Activated CD4-positive, alpha-beta T cell treated with anti-CD3 and anti-CD28 coated beads for 36 hours (primary cell): ENCODE measurements at regions of chr13 and their contacts with region 1.

Region 1: DNA sequence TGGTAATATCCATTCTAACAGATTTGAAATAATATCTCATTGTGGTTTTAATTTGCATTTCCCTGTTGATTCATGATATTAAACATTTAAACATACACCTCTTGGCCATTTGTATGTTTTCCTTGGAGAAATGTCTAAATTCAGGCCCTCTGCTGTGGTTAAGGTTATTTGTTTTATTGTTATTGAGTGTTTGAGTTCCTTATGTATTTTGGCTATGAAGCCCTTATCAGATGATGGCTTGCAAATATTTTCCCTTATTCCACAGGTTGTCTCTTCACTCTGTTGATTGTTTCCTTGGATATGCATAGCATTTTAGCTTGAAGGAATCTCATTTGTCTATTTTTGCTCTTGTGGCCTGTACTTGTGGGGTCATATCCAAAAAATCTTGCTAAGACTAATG is 303.6 kb downstream of the GPC5 start:
- DNase-seq: no peak
- ATAC-seq: no peak
- H3K4me3 Mint-ChIP-seq: no peak overlapping the region
- H3K27ac Mint-ChIP-seq: no peak overlapping the region
- H3K4me1 Mint-ChIP-seq: no peaks in the 10 kb centered on the region
- H3K27me3 Mint-ChIP-seq: no peaks in the 10 kb centered on the region

Region 2: DNA sequence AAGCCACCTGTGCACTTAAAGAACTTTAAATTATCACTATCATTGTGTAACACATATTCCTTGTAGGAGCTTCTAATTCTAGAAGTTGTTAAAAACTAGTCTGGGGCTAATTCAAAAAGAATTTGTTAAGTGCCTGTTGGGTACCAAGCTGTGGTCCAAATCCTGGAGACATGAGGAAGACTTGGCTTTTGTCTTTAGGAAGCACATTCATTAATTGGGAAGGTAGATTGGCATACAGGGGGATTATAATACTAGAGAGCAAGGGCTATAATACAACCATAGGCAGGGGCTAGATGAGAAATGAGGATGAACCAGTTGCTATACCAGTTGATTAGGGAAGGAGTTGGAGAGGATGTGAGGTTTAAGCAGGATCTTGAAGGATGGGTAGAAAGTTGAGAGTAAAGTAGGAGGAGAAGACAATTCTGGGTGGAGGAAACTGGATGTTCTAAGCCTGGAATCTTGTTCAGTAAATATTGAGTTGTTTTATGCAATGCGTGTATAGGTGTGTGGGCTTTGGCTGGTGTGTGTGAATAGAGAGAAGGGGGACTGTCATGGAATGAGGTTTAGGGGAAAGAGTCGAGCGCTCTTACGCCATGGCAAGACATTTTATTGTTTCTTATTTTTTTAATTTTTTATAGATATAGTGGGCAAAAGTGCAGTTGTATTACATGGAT is 46.6 kb after region 1 on chr13:
- CTCF ChIA-PET with region 1: no interaction called
- POLR2A ChIA-PET with region 1: no interaction called
- intact Hi-C with region 1: loop called in 1 of 2 experiments (anchors 1 kb)
- DNase-seq: no peak
- ATAC-seq: no peak
- H3K4me3 Mint-ChIP-seq: no peak overlapping the region
- H3K27ac Mint-ChIP-seq: no peak overlapping the region
- H3K4me1 Mint-ChIP-seq: no peaks in the 10 kb centered on the region
- H3K27me3 Mint-ChIP-seq: no peaks in the 10 kb centered on the region